CD8-positive, alpha-beta T cell (primary cell): ENCODE measurements at regions of chr3 and their contacts with region 1.

Region 1: GRCh38 chr3:186617038-186617946 is 4.4 kb downstream of the AHSG start:
- DNase-seq: peak; percentile 59 to 95 (median 87)
- ATAC-seq: peak; percentile 99
- H3K4me3 ChIP-seq: peak overlapping the region in 1 of 2 experiments; percentile 15
- H3K4me3 Mint-ChIP-seq: peak overlapping the region; percentile 67
- H3K27ac ChIP-seq: no peak overlapping the region
- H3K27ac Mint-ChIP-seq: no peak overlapping the region
- H3K4me1 ChIP-seq: peaks cover 17% of the 10 kb centered on the region
- H3K4me1 Mint-ChIP-seq: peaks cover 22% of the 10 kb centered on the region
- H3K27me3 ChIP-seq: peaks cover 0 to 10% of the 10 kb centered on the region in 2 experiments
- H3K27me3 Mint-ChIP-seq: peaks cover 34% of the 10 kb centered on the region
- CTCF ChIP-seq: peak; percentile 79

Region 2: GRCh38 chr3:185942907-185943759 is 674.2 kb before region 1 on chr3:
- CTCF ChIA-PET with region 1: interaction called, 17 read pairs
- POLR2A ChIA-PET with region 1: no interaction called
- intact Hi-C with region 1: no loop called
- DNase-seq: peak; percentile 70 to 90 (median 85)
- ATAC-seq: peak; percentile 100
- H3K4me3 ChIP-seq: no peak overlapping the region
- H3K4me3 Mint-ChIP-seq: peak overlapping the region; percentile 61
- H3K27ac ChIP-seq: no peak overlapping the region
- H3K27ac Mint-ChIP-seq: peak overlapping the region; percentile 72
- H3K4me1 ChIP-seq: peaks cover 8% of the 10 kb centered on the region
- H3K4me1 Mint-ChIP-seq: peaks cover 15% of the 10 kb centered on the region
- H3K27me3 ChIP-seq: peaks cover 0 to 2% of the 10 kb centered on the region in 2 experiments
- H3K27me3 Mint-ChIP-seq: peaks cover 2% of the 10 kb centered on the region
- CTCF ChIP-seq: peak; percentile 98

Region 3: GRCh38 chr3:186259612-186260383 is 357.5 kb before region 1 on chr3:
- CTCF ChIA-PET with region 1: interaction called, 12 read pairs
- POLR2A ChIA-PET with region 1: no interaction called
- intact Hi-C with region 1: loop called in 1 of 2 experiments (anchors 5 kb)
- DNase-seq: peak; percentile 42 to 80 (median 54)
- ATAC-seq: peak; percentile 93
- H3K4me3 ChIP-seq: no peak overlapping the region
- H3K4me3 Mint-ChIP-seq: no peak overlapping the region
- H3K27ac ChIP-seq: no peak overlapping the region
- H3K27ac Mint-ChIP-seq: peak overlapping the region; percentile 66
- H3K4me1 ChIP-seq: no peaks in the 10 kb centered on the region
- H3K4me1 Mint-ChIP-seq: peaks cover 16% of the 10 kb centered on the region
- H3K27me3 ChIP-seq: no peaks in the 10 kb centered on the region
- H3K27me3 Mint-ChIP-seq: no peaks in the 10 kb centered on the region
- CTCF ChIP-seq: peak; percentile 59

Region 4: GRCh38 chr3:186589121-186589520 is 28.2 kb before region 1 on chr3:
- CTCF ChIA-PET with region 1: interaction called, 110 read pairs
- POLR2A ChIA-PET with region 1: interaction called, 3 read pairs
- intact Hi-C with region 1: no loop called
- DNase-seq: no peak
- ATAC-seq: no peak
- H3K4me3 ChIP-seq: no peak overlapping the region
- H3K4me3 Mint-ChIP-seq: no peak overlapping the region
- H3K27ac ChIP-seq: no peak overlapping the region
- H3K27ac Mint-ChIP-seq: no peak overlapping the region
- H3K4me1 ChIP-seq: no peaks in the 10 kb centered on the region
- H3K4me1 Mint-ChIP-seq: peaks cover 5% of the 10 kb centered on the region
- H3K27me3 ChIP-seq: no peaks in the 10 kb centered on the region
- H3K27me3 Mint-ChIP-seq: no peaks in the 10 kb centered on the region
- CTCF ChIP-seq: no peak

Region 5: GRCh38 chr3:186630950-186631641 is 13.8 kb after region 1 on chr3:
- CTCF ChIA-PET with region 1: interaction called, 79 read pairs
- POLR2A ChIA-PET with region 1: no interaction called
- intact Hi-C with region 1: no loop called
- DNase-seq: no peak
- ATAC-seq: no peak
- H3K4me3 ChIP-seq: no peak overlapping the region
- H3K4me3 Mint-ChIP-seq: no peak overlapping the region
- H3K27ac ChIP-seq: no peak overlapping the region
- H3K27ac Mint-ChIP-seq: no peak overlapping the region
- H3K4me1 ChIP-seq: no peaks in the 10 kb centered on the region
- H3K4me1 Mint-ChIP-seq: no peaks in the 10 kb centered on the region
- H3K27me3 ChIP-seq: peaks cover 0 to 3% of the 10 kb centered on the region in 2 experiments
- H3K27me3 Mint-ChIP-seq: peaks cover 12% of the 10 kb centered on the region
- CTCF ChIP-seq: no peak

Region 6: DNA sequence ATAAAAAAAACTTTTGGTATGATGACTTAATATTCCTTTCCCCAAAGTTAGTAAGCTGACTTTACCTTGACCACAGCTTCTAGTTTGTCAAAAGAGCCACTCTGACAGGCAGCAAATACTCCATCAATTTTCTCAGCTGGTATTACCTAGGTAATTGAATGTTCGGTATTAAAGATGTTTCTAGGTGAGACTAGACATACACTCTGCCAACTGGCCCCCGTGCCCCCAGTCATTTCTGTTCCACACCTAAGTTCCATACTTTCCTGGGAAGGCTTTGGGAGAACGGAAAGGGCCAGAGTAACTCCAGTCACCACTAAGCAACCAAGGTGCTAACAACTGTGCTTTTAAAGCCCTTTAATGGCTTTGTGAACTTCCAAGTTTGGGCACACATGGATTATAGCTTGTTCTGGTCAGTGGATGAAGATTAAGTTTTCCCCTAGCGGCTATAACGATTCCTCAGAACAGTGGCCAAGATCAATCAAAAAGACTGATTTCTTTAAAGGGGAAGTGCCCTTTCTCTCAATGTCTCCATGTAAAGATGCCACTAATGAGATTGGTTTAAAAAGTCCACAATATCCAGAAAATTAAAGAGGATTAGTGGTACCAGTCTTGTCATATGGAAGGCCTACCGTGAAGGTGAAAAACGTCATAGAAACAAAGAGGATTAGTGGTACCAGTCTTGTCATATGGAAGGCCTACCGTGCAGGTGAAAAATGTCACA is 173.1 kb after region 1 on chr3:
- CTCF ChIA-PET with region 1: interaction called, 10 read pairs
- POLR2A ChIA-PET with region 1: interaction called, 3 read pairs
- intact Hi-C with region 1: no loop called
- DNase-seq: peak in 1 of 9 experiments; percentile 23
- ATAC-seq: no peak
- H3K4me3 ChIP-seq: no peak overlapping the region
- H3K4me3 Mint-ChIP-seq: no peak overlapping the region
- H3K27ac ChIP-seq: peak overlapping the region in 1 of 2 experiments; percentile 20
- H3K27ac Mint-ChIP-seq: peak overlapping the region; percentile 64
- H3K4me1 ChIP-seq: peaks cover 38% of the 10 kb centered on the region
- H3K4me1 Mint-ChIP-seq: peaks cover 46% of the 10 kb centered on the region
- H3K27me3 ChIP-seq: no peaks in the 10 kb centered on the region
- H3K27me3 Mint-ChIP-seq: no peaks in the 10 kb centered on the region
- CTCF ChIP-seq: no peak

Region 7: DNA sequence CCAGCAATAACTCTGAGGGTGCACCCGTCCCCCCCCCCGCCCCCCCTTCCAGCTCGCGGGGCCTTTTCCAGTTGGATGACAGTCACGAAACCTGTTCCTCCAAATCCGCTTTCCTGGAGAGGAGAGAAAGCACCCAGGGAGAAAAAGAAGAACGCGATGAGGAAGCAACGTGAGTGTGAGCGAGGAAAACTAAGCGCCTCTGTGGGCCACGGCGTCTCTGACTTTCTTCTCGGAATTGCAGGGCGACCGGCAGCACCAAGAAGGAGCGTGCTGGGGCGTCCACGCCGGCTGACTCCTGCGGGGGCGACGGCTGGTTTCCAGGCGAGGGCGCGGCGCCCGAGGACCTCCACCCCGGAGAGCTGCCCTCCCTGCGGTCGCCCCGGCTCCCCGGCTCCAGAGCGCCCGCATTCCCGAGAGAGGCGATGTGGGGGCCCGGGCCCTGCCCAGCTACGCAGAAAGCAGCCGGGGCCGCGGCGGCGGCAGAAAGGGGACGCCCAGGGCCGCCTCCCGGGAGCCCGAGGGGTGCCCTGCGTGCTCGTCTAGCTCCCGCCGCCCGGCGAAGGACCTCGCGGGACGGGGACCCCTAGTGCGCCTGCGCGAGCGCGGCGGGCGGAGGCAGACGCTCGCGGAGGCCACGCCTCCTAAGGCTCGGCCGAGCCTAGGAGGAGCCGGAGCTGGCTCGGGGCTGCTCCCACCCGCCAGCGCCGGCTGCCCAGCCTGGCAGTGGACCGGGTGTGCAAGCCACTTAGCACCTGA is 209.9 kb after region 1 on chr3:
- CTCF ChIA-PET with region 1: interaction called, 274 read pairs
- POLR2A ChIA-PET with region 1: interaction called, 5 read pairs
- intact Hi-C with region 1: no loop called
- DNase-seq: peak; percentile 59 to 95 (median 83)
- ATAC-seq: peak; percentile 93
- H3K4me3 ChIP-seq: peak overlapping the region; percentile 56 to 70
- H3K4me3 Mint-ChIP-seq: peak overlapping the region; percentile 75
- H3K27ac ChIP-seq: no peak overlapping the region
- H3K27ac Mint-ChIP-seq: no peak overlapping the region
- H3K4me1 ChIP-seq: peaks cover 21% of the 10 kb centered on the region
- H3K4me1 Mint-ChIP-seq: peaks cover 24% of the 10 kb centered on the region
- H3K27me3 ChIP-seq: peaks cover 14 to 26% of the 10 kb centered on the region in 2 experiments
- H3K27me3 Mint-ChIP-seq: peaks cover 50% of the 10 kb centered on the region
- CTCF ChIP-seq: no peak

Region 8: DNA sequence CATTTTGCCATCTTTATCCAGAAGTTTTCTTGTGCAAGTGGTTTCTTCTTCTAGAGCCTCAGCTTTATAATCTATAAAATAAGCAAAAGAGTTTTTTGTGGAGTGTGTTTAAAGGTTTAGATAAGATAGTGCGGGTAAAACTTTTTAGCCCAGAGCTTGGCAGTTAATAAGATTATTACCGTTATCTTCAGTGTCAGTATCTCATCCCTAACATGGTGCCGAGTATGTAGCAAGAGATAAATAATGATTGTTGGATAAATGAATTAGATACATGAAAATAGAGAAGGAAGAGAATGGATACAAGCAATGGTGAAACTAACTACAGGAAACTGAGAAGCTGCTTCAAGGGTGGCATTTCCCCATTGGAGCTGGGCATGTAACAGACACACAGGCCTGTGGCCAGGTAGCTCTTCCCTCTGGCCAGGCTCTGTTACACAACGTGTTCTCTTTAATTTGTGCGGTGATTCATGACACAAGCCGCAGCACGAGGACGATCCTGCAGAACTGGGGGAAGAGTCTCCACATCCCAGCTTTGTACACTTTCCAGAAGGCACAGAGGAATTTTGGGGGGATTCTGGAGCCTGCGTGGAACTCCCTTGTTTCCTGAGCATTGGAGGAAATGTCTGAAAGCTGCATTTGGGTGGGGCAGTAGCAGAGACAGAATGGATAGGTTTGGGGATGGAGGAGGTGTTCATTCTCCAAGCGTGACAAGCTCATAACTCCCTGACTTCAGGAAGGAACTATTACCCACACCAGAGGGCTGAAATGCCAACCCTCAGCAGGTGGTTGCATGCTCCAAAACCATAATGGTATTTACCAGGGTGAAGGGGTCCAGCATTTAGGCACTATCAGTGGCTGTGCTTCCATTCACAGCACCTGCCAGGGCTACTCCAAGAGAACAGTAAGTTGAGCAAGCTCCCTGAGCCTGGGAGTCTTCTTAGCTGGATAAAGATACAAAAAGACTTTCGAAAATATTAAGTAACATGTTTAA is 298.8 kb after region 1 on chr3:
- CTCF ChIA-PET with region 1: no interaction called
- POLR2A ChIA-PET with region 1: no interaction called
- intact Hi-C with region 1: no loop called
- DNase-seq: peak in 3 of 9 experiments; percentile 23 to 53 (median 50)
- ATAC-seq: peak; percentile 48
- H3K4me3 ChIP-seq: peak overlapping the region in 1 of 2 experiments; percentile 9
- H3K4me3 Mint-ChIP-seq: peak overlapping the region; percentile 50
- H3K27ac ChIP-seq: no peak overlapping the region
- H3K27ac Mint-ChIP-seq: peak overlapping the region; percentile 78
- H3K4me1 ChIP-seq: peaks cover 32% of the 10 kb centered on the region
- H3K4me1 Mint-ChIP-seq: peaks cover 40% of the 10 kb centered on the region
- H3K27me3 ChIP-seq: no peaks in the 10 kb centered on the region
- H3K27me3 Mint-ChIP-seq: no peaks in the 10 kb centered on the region
- CTCF ChIP-seq: no peak

Region 9: DNA sequence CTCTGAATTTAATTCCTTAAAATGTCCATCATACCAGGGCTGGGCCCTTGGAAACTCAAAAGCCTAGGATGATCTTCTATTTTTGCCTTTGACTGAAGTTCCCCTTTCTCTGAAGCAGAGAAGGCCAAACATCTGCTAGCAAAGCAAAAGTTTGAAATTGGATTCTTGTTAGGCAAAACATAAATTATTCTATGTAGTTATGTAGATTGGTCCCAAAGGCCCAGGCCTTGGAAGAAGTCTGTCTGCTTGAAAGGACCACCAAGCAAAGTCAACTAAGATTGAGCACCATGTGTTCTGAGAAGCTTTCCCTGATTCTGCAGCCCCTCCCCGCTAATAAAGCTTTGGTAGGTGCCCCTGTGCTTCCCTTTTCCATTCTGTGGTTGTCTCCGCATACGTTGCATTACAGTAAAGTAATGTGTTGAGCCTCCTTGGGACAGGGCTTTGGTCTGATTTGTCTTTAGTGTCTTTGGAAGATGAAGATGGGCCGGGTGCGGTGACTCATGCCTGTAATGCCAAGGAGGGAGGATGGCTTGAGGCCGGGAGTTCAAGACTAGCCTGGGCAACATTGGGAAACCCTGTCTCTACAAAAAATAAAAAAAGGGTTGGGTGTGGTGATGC is 465.6 kb after region 1 on chr3:
- CTCF ChIA-PET with region 1: no interaction called
- POLR2A ChIA-PET with region 1: no interaction called
- intact Hi-C with region 1: no loop called
- DNase-seq: no peak
- ATAC-seq: no peak
- H3K4me3 ChIP-seq: no peak overlapping the region
- H3K4me3 Mint-ChIP-seq: no peak overlapping the region
- H3K27ac ChIP-seq: no peak overlapping the region
- H3K27ac Mint-ChIP-seq: no peak overlapping the region
- H3K4me1 ChIP-seq: peaks cover 8% of the 10 kb centered on the region
- H3K4me1 Mint-ChIP-seq: peaks cover 9% of the 10 kb centered on the region
- H3K27me3 ChIP-seq: no peaks in the 10 kb centered on the region
- H3K27me3 Mint-ChIP-seq: no peaks in the 10 kb centered on the region
- CTCF ChIP-seq: no peak